ENCODE measurements at regions of chr6 and their contacts with region 1.

Region 1: GRCh38 chr6:161139766-161140553 is 133.9 kb downstream of the AGPAT4 start:
- DNase-seq: peak in 1 of 2 experiments; percentile 48
- H3K4me3 ChIP-seq: no peak overlapping the region
- H3K27ac ChIP-seq: no peak overlapping the region
- H3K4me1 ChIP-seq: no peaks in the 10 kb centered on the region; a peak in 1 of 7 replicates
- H3K27me3 ChIP-seq: no peaks in the 10 kb centered on the region
- CTCF ChIP-seq: peak in 2 of 3 experiments; percentile 4 to 9; a peak in 3 of 4 replicates
- EP300 ChIP-seq: no peak
- POLR2A ChIP-seq: no peak; a peak in 1 of 3 replicates
- RAD21 ChIP-seq: peak; percentile 41 to 48; a peak in 3 of 4 replicates

Region 2: GRCh38 chr6:161152907-161153662 is 13.1 kb after region 1 on chr6:
- CTCF ChIA-PET with region 1: interaction called, 30 read pairs
- POLR2A ChIA-PET with region 1: no interaction called
- DNase-seq: no peak
- H3K4me3 ChIP-seq: no peak overlapping the region
- H3K27ac ChIP-seq: no peak overlapping the region
- H3K4me1 ChIP-seq: no peaks in the 10 kb centered on the region
- H3K27me3 ChIP-seq: no peaks in the 10 kb centered on the region
- CTCF ChIP-seq: peak; percentile 38 to 51 (median 50); a peak in 3 of 4 replicates
- EP300 ChIP-seq: no peak
- POLR2A ChIP-seq: no peak
- RAD21 ChIP-seq: peak; percentile 68 to 72

Region 3: GRCh38 chr6:161218222-161218621 is 78.3 kb after region 1 on chr6:
- CTCF ChIA-PET with region 1: interaction called, 13 read pairs
- POLR2A ChIA-PET with region 1: no interaction called
- DNase-seq: no peak
- H3K4me3 ChIP-seq: no peak overlapping the region
- H3K27ac ChIP-seq: no peak overlapping the region
- H3K4me1 ChIP-seq: no peaks in the 10 kb centered on the region; a peak in 1 of 7 replicates
- H3K27me3 ChIP-seq: no peaks in the 10 kb centered on the region
- CTCF ChIP-seq: peak in 1 of 3 experiments; percentile 10; a peak in 1 of 4 replicates
- EP300 ChIP-seq: no peak
- POLR2A ChIP-seq: no peak
- RAD21 ChIP-seq: peak; percentile 1 to 11; a peak in 1 of 4 replicates